Mammary epithelial cell (primary cell): ENCODE measurements at regions of chr17 and their contacts with region 1.

Region 1: DNA sequence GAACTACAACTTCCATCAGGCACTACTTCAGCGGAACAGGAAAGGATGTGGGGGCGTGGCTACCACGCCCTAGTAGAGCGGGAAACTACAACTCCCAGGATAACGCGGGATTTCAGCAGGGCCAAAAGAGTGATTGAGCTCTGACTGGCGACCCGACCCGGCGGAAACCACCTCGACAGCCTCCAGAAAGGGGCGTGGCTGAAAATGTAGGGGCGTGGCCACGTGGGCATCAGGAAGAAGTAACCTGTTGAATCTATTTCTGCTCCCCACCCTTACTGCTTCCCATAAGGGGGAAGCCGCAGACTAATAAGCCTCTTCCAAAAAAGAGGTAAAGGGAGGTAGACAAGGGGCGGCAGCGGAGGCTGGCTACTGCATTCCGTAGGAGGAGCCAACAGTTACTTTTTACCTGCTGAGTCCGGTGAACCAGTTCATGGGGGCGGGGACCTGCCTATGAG is at the start of gene TMEM102:
- DNase-seq: peak; percentile 97
- H3K4me3 ChIP-seq: peak within 1 kb of the TSS; percentile 60 to 85 (median 68)
- H3K27ac ChIP-seq: peak within 1 kb of the TSS; percentile 81
- H3K4me1 ChIP-seq: peaks cover 38% of the 10 kb centered on the region
- H3K27me3 ChIP-seq: no peaks in the 10 kb centered on the region
- CTCF ChIP-seq: no peak
- total RNA-seq, gene TMEM102: 14.5 to 16.0 TPM

Region 2: DNA sequence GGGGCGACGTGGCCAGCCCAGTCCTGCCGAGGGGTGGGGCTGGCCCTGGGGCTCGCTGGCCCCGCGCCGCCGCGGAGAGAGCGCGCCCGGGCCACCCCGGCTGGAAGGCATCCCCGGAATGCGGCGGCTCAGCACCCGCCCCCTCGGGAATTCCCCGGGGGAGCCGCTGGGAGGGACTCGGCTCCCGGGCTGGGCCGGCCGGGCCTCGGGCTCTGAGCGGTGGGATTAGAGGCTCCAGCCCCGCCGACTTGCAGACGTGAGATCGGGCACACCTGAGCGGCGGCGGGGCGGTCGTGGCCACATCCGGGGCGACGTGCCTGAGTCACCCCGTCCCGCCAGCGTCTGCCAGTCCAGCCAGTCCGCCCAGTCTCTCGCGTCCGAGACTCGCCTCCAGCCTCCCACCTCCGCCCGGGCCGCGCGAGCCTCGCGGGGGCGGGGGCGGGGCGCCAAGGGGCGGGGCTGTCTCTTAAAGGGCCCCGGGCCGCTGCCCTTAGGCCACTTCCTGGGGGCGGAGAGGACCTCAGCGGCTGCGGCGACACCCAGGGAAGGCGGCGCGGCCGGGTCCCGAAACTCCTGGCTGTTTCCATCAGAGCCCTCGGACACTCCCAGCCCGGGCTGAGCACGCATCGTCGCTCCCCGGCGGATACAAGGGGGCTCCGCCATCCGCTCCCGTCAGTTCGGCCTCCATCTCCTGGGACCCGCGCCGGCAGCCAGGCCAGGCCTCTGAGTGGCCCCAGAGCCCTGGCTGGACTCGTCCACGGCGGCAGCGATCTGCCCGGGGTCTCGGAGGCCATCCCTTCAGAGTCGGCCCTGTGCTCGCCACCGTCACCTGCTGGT is 83.4 kb before region 1 on chr17 and contains the start of gene KCTD11:
- CTCF ChIA-PET with region 1: interaction called, 4 read pairs
- dilution Hi-C with region 1: no loop called
- in situ Hi-C with region 1: loop called in 1 of 2 experiments (anchors 5 kb)
- intact Hi-C with region 1: loop called (anchors 1 kb)
- DNase-seq: peak; percentile 99
- H3K4me3 ChIP-seq: peak within 1 kb of the TSS; percentile 60 to 88 (median 77)
- H3K27ac ChIP-seq: peak within 1 kb of the TSS; percentile 99
- H3K4me1 ChIP-seq: peaks cover 46% of the 10 kb centered on the region
- H3K27me3 ChIP-seq: no peaks in the 10 kb centered on the region
- CTCF ChIP-seq: peak in 1 of 2 donors; percentile 30
- total RNA-seq, gene KCTD11: 13.2 to 43.9 TPM

Region 3: DNA sequence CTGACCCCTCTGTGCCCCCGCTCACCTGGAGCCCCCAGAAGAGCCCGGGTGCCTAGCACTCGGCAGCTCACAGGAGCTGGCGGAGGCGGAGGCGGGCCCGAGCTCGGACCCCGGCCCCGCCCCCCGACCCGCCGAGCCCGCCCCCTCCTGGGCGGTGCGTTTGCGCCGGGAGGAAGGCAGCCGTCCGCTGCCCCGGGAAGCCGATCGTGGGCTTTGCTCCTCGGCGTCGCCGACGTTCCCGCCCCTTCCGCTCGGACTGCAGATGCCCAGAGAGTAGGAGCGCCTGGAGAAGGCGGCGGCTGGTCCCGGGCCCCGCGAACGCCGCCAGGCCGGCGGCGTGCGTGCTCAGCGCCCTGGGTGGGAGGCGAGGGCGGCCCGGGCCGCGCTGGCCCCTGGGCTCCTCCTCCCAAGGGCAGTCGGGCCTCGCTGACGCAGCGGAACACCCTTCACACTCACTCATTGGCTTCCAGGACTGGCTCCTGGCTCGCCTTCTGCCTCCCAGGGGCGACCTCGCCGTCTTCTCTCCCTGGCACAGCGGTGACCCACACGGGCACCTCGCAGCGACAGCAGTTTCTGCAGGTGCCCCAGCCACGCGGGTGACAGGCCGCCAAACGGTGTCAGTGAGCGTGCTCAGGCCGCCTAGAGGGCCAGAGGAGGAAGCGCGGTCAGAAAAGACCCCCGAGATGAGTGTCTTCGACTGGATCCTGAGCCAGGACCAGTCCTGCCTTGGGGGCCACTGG is 40.6 kb before region 1 on chr17 and contains the start of gene PLSCR3:
- CTCF ChIA-PET with region 1: no interaction called
- dilution Hi-C with region 1: loop called (anchors 5 kb)
- in situ Hi-C with region 1: no loop called
- intact Hi-C with region 1: loop called (anchors 1 kb)
- DNase-seq: peak; percentile 88
- H3K4me3 ChIP-seq: peak within 1 kb of the TSS; percentile 75 to 98 (median 88)
- H3K27ac ChIP-seq: peak within 1 kb of the TSS; percentile 70
- H3K4me1 ChIP-seq: peaks cover 10% of the 10 kb centered on the region
- H3K27me3 ChIP-seq: no peaks in the 10 kb centered on the region
- CTCF ChIP-seq: peak in 1 of 2 donors; percentile 46
- total RNA-seq, gene PLSCR3: 32.3 to 127 TPM

Region 4: DNA sequence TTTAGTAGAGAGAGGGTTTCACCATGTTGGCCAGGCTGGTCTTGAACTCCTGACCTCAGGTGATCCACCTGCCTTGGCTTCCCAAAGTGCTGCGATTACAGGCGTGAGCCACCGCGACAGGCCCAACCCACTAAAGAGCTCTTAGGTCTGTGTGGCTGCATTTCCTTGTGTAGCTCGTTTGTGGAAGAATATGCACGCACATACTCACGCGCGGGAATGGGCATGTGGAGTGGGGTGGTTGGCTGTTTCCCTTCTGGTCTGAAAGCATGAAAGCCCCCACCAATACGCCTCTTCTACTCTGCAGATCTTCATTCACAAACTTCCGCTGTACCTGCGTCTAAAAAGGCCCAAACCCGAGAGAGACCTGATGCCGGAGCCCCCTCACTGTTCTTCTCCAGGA is 19.7 kb after region 1 on chr17:
- CTCF ChIA-PET with region 1: no interaction called
- dilution Hi-C with region 1: no loop called
- in situ Hi-C with region 1: no loop called
- intact Hi-C with region 1: loop called (anchors 2 kb)
- DNase-seq: no peak
- H3K4me3 ChIP-seq: peak overlapping the region in 2 of 3 experiments; percentile 60 to 61
- H3K27ac ChIP-seq: no peak overlapping the region
- H3K4me1 ChIP-seq: peaks cover 20% of the 10 kb centered on the region
- H3K27me3 ChIP-seq: no peaks in the 10 kb centered on the region
- CTCF ChIP-seq: no peak

Region 5: DNA sequence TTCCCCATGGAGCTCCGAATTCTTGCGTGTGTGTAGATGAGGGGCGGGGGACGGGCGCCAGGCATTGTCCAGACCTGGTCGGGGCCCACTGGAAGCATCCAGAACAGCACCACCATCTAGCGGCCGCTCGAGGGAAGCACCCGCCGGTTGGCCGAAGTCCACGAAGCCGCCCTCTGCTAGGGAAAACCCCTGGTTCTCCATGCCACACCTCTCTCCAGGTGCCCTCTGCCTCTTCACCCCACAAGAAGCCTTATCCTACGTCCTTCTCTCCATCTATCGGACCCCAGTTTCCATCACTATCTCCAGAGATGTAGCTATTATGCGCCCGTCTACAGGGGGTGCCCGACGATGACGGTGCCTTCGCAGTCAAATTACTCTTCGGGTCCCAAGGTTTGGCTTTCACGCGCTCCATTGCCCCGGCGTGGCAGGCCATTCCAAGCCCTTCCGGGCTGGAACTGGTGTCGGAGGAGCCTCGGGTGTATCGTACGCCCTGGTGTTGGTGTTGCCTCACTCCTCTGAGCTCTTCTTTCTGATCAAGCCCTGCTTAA is 125.9 kb after region 1 on chr17:
- CTCF ChIA-PET with region 1: interaction called, 8 read pairs
- dilution Hi-C with region 1: no loop called
- in situ Hi-C with region 1: no loop called
- intact Hi-C with region 1: loop called (anchors 1 kb)
- DNase-seq: peak; percentile 87
- H3K4me3 ChIP-seq: peak overlapping the region; percentile 60 to 82 (median 73)
- H3K27ac ChIP-seq: peak overlapping the region; percentile 76
- H3K4me1 ChIP-seq: peaks cover 40% of the 10 kb centered on the region
- H3K27me3 ChIP-seq: no peaks in the 10 kb centered on the region
- CTCF ChIP-seq: peak; percentile 64 to 82

Region 6: GRCh38 chr17:7606280-7606679 is 171.0 kb after region 1 on chr17:
- CTCF ChIA-PET with region 1: no interaction called
- dilution Hi-C with region 1: no loop called
- in situ Hi-C with region 1: no loop called
- intact Hi-C with region 1: no loop called
- DNase-seq: no peak
- H3K4me3 ChIP-seq: no peak overlapping the region
- H3K27ac ChIP-seq: no peak overlapping the region
- H3K4me1 ChIP-seq: peaks cover 3% of the 10 kb centered on the region
- H3K27me3 ChIP-seq: no peaks in the 10 kb centered on the region
- CTCF ChIP-seq: no peak

Region 7: DNA sequence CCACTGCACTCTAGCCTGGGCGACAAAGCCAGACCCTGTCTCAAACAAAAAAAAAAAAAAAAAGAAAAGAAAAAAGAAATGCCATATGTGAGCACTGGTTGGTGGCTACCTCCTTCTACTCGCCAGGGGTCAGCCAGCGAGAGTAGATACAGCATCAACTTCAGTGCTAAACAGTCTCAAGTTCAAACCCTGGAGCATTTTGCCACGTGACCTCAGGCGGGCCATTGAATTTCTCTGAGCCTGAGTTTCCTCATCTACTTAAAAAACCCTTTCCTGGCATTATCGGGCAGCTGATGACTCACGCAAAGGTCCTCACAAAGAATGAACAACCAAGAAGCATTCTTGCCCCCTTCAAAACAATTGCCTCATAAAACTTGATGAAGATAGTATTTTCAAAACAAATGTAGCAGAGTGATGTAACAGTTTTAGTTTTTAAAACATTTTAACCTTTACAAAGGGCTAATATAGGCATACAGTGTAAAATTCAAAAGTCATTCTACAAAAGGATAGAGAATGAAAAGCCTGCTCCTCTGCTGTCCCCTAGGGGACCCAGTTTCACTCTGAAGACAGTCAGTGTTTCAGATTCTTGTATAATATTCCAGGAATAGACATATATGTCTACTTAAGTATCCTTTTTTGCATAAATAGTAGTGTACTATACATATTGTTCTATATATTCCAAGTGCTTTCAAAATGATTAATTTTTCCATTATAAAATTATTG is 310.7 kb after region 1 on chr17:
- CTCF ChIA-PET with region 1: no interaction called
- dilution Hi-C with region 1: no loop called
- in situ Hi-C with region 1: no loop called
- intact Hi-C with region 1: no loop called
- DNase-seq: peak; percentile 60
- H3K4me3 ChIP-seq: no peak overlapping the region
- H3K27ac ChIP-seq: peak overlapping the region; percentile 12
- H3K4me1 ChIP-seq: peaks cover 45% of the 10 kb centered on the region
- H3K27me3 ChIP-seq: no peaks in the 10 kb centered on the region
- CTCF ChIP-seq: peak in 1 of 2 donors; percentile 13